ENCODE measurements at regions of chr3 and their contacts with region 1.

Region 1: DNA sequence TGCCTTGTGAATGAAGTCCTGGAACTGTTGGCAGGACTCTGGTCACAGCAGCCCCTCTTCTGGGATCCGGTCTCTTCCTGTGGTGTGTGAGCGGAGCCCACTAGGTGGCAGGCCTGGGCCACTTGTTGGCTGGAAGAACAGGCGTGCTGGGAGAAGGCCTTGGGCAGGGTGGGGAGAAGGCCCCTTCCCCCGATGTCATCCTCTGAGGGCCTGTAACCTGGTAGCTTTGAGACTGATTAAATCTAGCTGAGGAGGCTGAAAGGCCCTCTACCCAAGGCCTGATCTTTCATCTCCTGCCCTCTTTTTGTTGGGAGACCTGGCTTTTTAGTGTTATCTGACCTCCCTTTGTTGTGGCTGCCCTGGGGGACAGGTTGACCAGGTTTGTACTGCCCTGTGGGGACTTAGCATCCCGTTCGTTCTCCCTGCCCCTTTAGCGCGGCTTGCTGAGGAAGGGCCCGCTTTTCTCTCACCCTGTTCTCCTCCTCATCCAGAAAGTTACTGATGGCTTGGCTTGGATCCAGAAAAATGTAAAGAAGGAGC is 48.3 kb downstream of the CHCHD6 start:
- DNase-seq: peak; percentile 82
- CTCF ChIP-seq: peak; percentile 94

Region 2: GRCh38 chr3:126468028-126468891 is 284.1 kb before region 1 on chr3:
- in situ Hi-C with region 1: no loop called
- DNase-seq: no peak
- CTCF ChIP-seq: no peak

Region 3: DNA sequence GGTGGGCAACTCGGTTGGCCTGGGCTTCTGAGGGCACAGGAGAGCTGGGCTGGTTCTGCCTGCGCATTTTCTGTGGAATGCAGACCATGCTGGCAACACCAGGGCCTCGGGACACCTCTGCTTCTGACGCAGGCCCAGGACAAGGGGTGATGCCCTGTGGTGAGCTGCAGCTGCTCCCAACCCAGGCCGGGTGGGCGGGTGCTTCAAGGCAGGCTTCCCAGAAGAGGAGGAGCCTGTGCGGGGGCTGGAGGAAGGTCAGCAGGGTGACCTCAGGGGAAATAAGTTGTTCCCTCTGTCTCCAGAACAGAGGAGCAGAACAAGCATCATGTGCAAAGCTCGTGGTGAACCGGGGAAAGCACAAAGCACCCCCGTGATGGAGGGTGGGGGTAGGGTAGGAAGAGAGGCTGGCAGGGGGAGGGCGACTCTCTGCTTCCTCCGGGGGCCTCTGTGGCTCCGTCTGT is 219.5 kb after region 1 on chr3:
- in situ Hi-C with region 1: loop called (anchors 10 kb)
- DNase-seq: peak; percentile 40
- CTCF ChIP-seq: no peak